ENCODE measurements at regions of chr22 and their contacts with region 1.

Region 1: GRCh38 chr22:22545084-22545483 is 14.0 kb downstream of the PRAME start:
- DNase-seq: no peak
- ATAC-seq: no peak
- H3K4me3 ChIP-seq: no peak overlapping the region
- H3K27ac ChIP-seq: no peak overlapping the region
- H3K4me1 ChIP-seq: no peaks in the 10 kb centered on the region
- H3K27me3 ChIP-seq: no peaks in the 10 kb centered on the region
- CTCF ChIP-seq: no peak

Region 2: GRCh38 chr22:22526125-22526912 is 18.8 kb before region 1 on chr22:
- CTCF ChIA-PET with region 1: no interaction called
- POLR2A ChIA-PET with region 1: interaction called, 17 read pairs
- intact Hi-C with region 1: no loop called
- DNase-seq: no peak
- ATAC-seq: no peak
- H3K4me3 ChIP-seq: no peak overlapping the region
- H3K27ac ChIP-seq: no peak overlapping the region
- H3K4me1 ChIP-seq: no peaks in the 10 kb centered on the region
- H3K27me3 ChIP-seq: peaks cover 15% of the 10 kb centered on the region
- CTCF ChIP-seq: no peak

Measured in PC-3 (cell line).